K562 (cell line): ENCODE measurements at regions of chr9 and their contacts with region 1.

Region 1: GRCh38 chr9:129879103-129879699 is 43.9 kb downstream of the USP20 start:
- DNase-seq: peak; percentile 96 to 99 (median 96)
- ATAC-seq: no peak
- H3K4me3 ChIP-seq: no peak overlapping the region
- H3K27ac ChIP-seq: no peak overlapping the region
- H3K4me1 ChIP-seq: peaks cover 8 to 48% of the 10 kb centered on the region in 2 experiments
- H3K27me3 ChIP-seq: no peaks in the 10 kb centered on the region; a peak in 1 of 5 replicates
- CTCF ChIP-seq: peak in 2 of 3 experiments; percentile 7 to 11; a peak in 3 of 6 replicates
- EP300 ChIP-seq: peak; percentile 98
- POLR2A ChIP-seq: no peak
- RAD21 ChIP-seq: peak in 1 of 2 experiments; percentile 56; a peak in 3 of 4 replicates

Region 2: GRCh38 chr9:129845373-129845772 is 33.8 kb before region 1 on chr9:
- CTCF ChIA-PET with region 1: no interaction called
- POLR2A ChIA-PET with region 1: interaction called, 14 read pairs
- in situ Hi-C with region 1: no loop called
- intact Hi-C with region 1: no loop called
- DNase-seq: no peak
- ATAC-seq: no peak
- H3K4me3 ChIP-seq: no peak overlapping the region
- H3K27ac ChIP-seq: peak overlapping the region; percentile 23; the same call in 1 of the 3 replicates
- H3K4me1 ChIP-seq: peaks cover 0 to 14% of the 10 kb centered on the region in 2 experiments; a peak in 3 of 5 replicates
- H3K27me3 ChIP-seq: no peaks in the 10 kb centered on the region
- CTCF ChIP-seq: no peak
- EP300 ChIP-seq: no peak
- POLR2A ChIP-seq: no peak
- RAD21 ChIP-seq: no peak

Region 3: DNA sequence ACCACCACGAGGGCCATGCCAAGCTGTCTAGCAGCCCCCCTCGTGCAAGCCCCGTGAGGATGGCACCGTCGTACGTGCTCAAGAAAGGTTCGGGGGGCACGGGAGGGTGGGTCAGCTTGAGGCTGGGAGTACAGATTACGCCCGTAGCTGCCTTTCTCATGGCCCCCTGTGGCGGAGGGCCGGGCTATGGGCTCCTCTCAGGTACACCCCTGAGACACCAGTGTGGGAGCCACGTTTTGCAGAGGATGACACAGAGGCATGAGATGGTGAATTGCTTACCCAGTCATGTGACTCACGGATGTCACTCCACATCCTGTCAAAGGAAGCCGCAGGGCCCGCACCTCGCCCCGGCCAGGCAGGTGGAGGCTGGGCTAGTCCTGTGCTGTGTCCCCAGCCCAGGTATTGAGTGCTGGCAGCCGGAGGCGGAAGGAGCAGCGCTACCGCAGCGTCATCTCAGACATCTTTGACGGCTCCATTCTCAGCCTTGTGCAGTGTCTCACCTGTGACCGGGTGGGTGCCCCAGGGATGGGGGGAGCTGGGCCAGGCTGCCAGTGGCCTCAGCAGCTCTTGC is 10.2 kb before region 1 on chr9:
- CTCF ChIA-PET with region 1: no interaction called
- POLR2A ChIA-PET with region 1: interaction called, 30 read pairs
- in situ Hi-C with region 1: no loop called
- intact Hi-C with region 1: no loop called
- DNase-seq: no peak
- ATAC-seq: no peak
- H3K4me3 ChIP-seq: no peak overlapping the region
- H3K27ac ChIP-seq: no peak overlapping the region
- H3K4me1 ChIP-seq: peaks cover 11 to 67% of the 10 kb centered on the region in 2 experiments
- H3K27me3 ChIP-seq: no peaks in the 10 kb centered on the region
- CTCF ChIP-seq: no peak
- EP300 ChIP-seq: no peak
- POLR2A ChIP-seq: no peak
- RAD21 ChIP-seq: no peak